ENCODE measurements at regions of chr5 and their contacts with region 1.

Region 1: GRCh38 chr5:143002459-143003328 is 232.5 kb downstream of the ARHGAP26 start:
- DNase-seq: peak; percentile 59
- H3K4me3 ChIP-seq: no peak overlapping the region
- H3K27ac ChIP-seq: peak overlapping the region; percentile 71
- H3K4me1 ChIP-seq: peaks cover 17% of the 10 kb centered on the region
- H3K27me3 ChIP-seq: no peaks in the 10 kb centered on the region
- CTCF ChIP-seq: peak; percentile 59 to 72

Region 2: GRCh38 chr5:143200781-143201398 is 198.2 kb after region 1 on chr5:
- CTCF ChIA-PET with region 1: no interaction called
- dilution Hi-C with region 1: no loop called
- in situ Hi-C with region 1: no loop called
- intact Hi-C with region 1: loop called (anchors 10 kb)
- DNase-seq: peak; percentile 96
- H3K4me3 ChIP-seq: no peak overlapping the region
- H3K27ac ChIP-seq: peak overlapping the region; percentile 68
- H3K4me1 ChIP-seq: peaks cover 67% of the 10 kb centered on the region
- H3K27me3 ChIP-seq: no peaks in the 10 kb centered on the region
- CTCF ChIP-seq: no peak

Region 3: GRCh38 chr5:143395638-143396352 is 393.1 kb after region 1 on chr5:
- CTCF ChIA-PET with region 1: no interaction called
- dilution Hi-C with region 1: loop called (anchors 5 kb)
- in situ Hi-C with region 1: loop called in 1 of 2 experiments (anchors 10 kb)
- intact Hi-C with region 1: no loop called
- DNase-seq: peak; percentile 58
- H3K4me3 ChIP-seq: peak overlapping the region; percentile 72 to 83 (median 78)
- H3K27ac ChIP-seq: peak overlapping the region; percentile 97
- H3K4me1 ChIP-seq: peaks cover 14% of the 10 kb centered on the region
- H3K27me3 ChIP-seq: no peaks in the 10 kb centered on the region
- CTCF ChIP-seq: no peak

Region 4: DNA sequence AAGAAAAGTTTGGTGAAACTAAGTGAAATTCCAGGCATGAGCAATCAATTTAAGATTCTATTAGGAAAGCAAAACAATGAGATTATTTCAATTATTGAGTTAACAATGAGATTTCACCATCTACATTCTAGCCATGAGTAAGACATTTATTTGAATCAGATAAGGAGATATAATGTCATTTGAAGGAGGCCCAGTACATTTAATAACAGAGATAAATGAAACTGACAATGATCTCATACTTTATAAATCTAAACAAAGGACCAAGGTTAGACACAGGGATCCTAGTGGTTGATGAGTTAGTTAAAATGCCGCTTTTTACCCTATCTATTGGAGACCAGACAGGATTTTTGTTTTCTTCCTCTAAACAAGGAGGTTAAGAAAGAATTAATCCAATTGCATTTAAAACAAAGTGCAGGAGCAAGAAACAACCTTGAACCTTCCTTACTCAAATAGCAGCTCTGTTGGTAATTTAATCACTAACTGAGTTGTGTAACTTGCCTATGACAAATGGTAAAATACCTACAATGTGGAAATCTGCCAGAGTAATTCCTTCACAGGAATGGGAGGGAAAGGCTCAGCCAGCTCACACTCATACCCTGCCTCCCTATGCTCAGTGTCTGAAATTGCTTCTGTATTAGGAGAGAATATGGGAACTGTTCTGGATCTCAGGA is 504.3 kb after region 1 on chr5:
- CTCF ChIA-PET with region 1: no interaction called
- dilution Hi-C with region 1: no loop called
- in situ Hi-C with region 1: no loop called
- intact Hi-C with region 1: loop called (anchors 10 kb)
- DNase-seq: peak; percentile 90
- H3K4me3 ChIP-seq: no peak overlapping the region
- H3K27ac ChIP-seq: peak overlapping the region; percentile 15
- H3K4me1 ChIP-seq: peaks cover 18% of the 10 kb centered on the region
- H3K27me3 ChIP-seq: no peaks in the 10 kb centered on the region
- CTCF ChIP-seq: peak in 1 of 2 donors; percentile 49

Region 5: DNA sequence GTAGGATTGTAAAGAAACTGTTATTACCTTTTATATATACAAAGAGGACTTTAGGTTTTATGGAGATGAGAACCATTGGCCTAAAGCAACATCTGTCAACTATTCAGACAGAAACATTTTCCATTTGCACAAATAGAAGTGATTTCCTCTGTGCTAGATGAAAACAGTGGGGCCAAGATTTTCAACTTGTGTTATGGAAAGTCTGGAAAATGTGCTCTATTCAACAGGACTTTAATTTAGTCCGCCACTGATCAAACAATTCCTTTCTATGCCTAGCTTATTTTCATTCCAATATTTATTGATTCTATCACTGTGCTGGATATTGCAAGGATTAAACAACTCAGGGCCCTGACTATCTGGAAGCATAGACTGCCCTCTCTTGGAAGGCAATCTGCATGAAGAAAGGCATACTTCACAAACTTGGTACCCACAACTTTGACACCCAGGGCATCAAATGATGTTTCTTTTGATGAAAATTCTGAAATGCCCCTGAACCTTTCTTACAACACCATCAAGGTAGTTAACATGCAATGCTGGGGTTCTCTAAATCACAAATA is 682.6 kb after region 1 on chr5:
- CTCF ChIA-PET with region 1: no interaction called
- dilution Hi-C with region 1: no loop called
- in situ Hi-C with region 1: no loop called
- intact Hi-C with region 1: loop called (anchors 10 kb)
- DNase-seq: no peak
- H3K4me3 ChIP-seq: no peak overlapping the region
- H3K27ac ChIP-seq: no peak overlapping the region
- H3K4me1 ChIP-seq: no peaks in the 10 kb centered on the region
- H3K27me3 ChIP-seq: no peaks in the 10 kb centered on the region
- CTCF ChIP-seq: peak; percentile 27 to 63

Region 6: DNA sequence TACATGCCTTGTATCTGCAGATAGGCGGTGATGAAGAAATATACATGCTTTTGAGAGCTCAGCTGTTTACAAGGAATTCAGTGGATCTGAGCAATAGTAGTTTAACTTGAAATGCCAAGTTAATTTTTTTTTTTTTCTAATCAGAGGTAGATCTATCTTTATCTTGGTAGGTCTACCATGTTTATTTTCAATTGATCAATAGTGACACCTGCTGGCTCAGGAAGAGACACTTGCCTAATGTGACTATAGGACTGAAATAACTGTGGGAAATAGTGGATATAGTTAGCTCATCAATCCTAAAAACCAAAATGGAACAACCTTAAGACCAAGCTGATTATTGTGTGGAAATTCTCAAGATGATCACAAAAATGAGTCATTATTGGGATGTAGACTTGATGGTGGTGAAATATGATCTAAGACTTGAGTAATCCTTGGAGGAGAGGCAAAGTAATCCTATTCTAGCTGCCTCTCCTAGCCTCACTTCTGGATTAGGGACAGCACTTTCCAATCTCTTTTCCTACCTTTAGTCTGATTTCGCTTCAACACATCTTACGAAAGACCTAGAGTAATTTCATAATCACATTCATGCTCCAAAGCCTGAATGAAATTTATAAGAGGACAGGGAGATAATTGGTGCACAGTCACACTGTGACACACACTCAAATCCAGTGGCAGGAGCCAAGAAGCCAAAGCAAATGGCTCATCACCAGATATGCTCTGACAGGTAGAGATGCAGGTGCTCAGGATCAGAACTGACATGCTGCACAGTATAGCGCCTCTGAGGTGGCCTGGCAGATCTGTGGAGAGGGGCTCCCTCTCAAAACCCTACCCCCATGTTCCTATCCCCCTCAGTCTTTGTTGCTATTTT is 965.6 kb after region 1 on chr5:
- CTCF ChIA-PET with region 1: no interaction called
- dilution Hi-C with region 1: no loop called
- in situ Hi-C with region 1: loop called in 1 of 2 experiments (anchors 25 kb)
- intact Hi-C with region 1: loop called (anchors 2 kb)
- DNase-seq: peak; percentile 70
- H3K4me3 ChIP-seq: no peak overlapping the region
- H3K27ac ChIP-seq: no peak overlapping the region
- H3K4me1 ChIP-seq: peaks cover 7% of the 10 kb centered on the region
- H3K27me3 ChIP-seq: no peaks in the 10 kb centered on the region
- CTCF ChIP-seq: peak; percentile 39 to 59

Region 7: DNA sequence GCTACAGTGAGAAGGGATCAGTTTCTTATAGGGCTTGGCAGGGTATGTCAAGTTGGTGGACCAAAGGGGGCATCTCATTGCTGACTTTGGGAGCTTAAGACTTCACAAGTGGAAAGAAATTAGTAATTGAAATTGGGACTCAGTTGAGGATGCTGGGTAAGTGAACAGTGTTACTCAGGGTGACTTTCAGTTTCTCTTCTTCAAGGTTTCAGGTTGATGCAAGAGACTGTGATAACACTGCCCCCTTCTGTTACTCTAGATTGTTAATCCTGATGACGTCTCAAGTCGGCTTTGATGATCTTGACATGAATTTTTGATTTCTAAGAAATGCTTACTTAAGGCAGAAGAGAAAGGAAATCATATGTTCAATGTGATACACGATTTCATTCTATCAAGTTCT is 1189.3 kb after region 1 on chr5:
- CTCF ChIA-PET with region 1: no interaction called
- dilution Hi-C with region 1: no loop called
- in situ Hi-C with region 1: no loop called
- intact Hi-C with region 1: loop called (anchors 10 kb)
- DNase-seq: peak; percentile 75
- H3K4me3 ChIP-seq: peak overlapping the region in 1 of 3 experiments; percentile 23
- H3K27ac ChIP-seq: no peak overlapping the region
- H3K4me1 ChIP-seq: peaks cover 17% of the 10 kb centered on the region
- H3K27me3 ChIP-seq: peaks cover 3% of the 10 kb centered on the region
- CTCF ChIP-seq: peak; percentile 40 to 44

Measured in mammary epithelial cell (primary cell).